Activated naive CD8-positive, alpha-beta T cell treated with anti-CD3 and anti-CD28 coated beads, Interleukin-2, amount 10 ng/mL, durations not matched to agents 7 days and 5 days (primary cell): ENCODE measurements at regions of chr13 and their contacts with region 1.

Region 1: GRCh38 chr13:42377640-42378382 is 105.9 kb downstream of the AKAP11 start:
- DNase-seq: no peak
- ATAC-seq: peak; percentile 77
- H3K4me3 Mint-ChIP-seq: peak overlapping the region; percentile 57
- H3K27ac Mint-ChIP-seq: peak overlapping the region; percentile 89
- H3K4me1 Mint-ChIP-seq: peaks cover 47% of the 10 kb centered on the region
- H3K27me3 Mint-ChIP-seq: no peaks in the 10 kb centered on the region

Region 2: DNA sequence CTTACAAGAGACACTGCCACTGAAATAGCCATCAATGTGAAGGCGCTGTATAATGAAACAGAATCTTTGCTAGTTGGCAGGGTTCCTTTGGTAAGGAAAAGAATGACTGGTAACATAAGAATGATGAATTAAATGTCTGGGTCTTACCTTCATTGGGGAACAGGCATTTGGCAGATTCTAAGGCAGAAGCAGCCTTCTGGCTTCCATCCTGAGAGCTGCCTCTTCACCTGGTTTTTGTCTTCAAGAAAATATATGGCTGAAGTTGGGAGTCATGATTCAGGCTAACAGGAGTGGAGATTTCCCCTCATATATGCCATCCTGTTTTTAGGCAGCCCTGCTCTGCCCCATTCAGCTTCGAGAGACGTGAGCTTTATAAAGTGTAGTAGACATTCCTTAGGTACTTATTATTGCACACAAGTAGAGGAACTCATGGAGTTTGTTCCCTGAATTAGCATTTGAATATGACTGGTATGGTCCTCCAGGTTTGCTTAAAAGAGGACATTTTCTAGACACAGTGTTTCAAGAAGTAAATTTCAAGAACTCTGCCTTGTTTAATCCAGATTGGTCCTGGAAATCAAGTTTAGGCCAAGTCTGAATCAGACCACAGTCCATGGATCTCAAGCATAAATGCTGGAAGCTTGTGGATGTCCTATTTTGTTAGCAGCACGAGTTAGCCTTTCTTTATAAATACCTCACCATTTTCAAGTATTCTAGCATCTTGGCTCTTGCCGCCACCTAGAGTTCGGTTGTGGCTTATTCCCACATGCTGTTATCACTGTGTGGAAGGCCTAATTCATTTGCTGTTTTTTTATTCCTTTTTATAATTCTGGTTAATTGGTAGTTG is 162.0 kb before region 1 on chr13:
- POLR2A ChIA-PET with region 1: no interaction called
- DNase-seq: no peak
- ATAC-seq: peak; percentile 67
- H3K4me3 Mint-ChIP-seq: no peak overlapping the region
- H3K27ac Mint-ChIP-seq: no peak overlapping the region
- H3K4me1 Mint-ChIP-seq: no peaks in the 10 kb centered on the region
- H3K27me3 Mint-ChIP-seq: no peaks in the 10 kb centered on the region

Region 3: GRCh38 chr13:42354241-42355091 is 23.3 kb before region 1 on chr13:
- POLR2A ChIA-PET with region 1: interaction called, 10 read pairs
- DNase-seq: peak; percentile 42
- ATAC-seq: peak; percentile 74
- H3K4me3 Mint-ChIP-seq: peak overlapping the region; percentile 72
- H3K27ac Mint-ChIP-seq: peak overlapping the region; percentile 97
- H3K4me1 Mint-ChIP-seq: peaks cover 31% of the 10 kb centered on the region
- H3K27me3 Mint-ChIP-seq: no peaks in the 10 kb centered on the region

Region 4: GRCh38 chr13:42392716-42393572 is 15.1 kb after region 1 on chr13:
- POLR2A ChIA-PET with region 1: interaction called, 15 read pairs
- DNase-seq: no peak
- ATAC-seq: peak; percentile 62
- H3K4me3 Mint-ChIP-seq: peak overlapping the region; percentile 64
- H3K27ac Mint-ChIP-seq: peak overlapping the region; percentile 97
- H3K4me1 Mint-ChIP-seq: peaks cover 72% of the 10 kb centered on the region
- H3K27me3 Mint-ChIP-seq: no peaks in the 10 kb centered on the region